ENCODE measurements at regions of chr1 and their contacts with region 1.

Region 1: DNA sequence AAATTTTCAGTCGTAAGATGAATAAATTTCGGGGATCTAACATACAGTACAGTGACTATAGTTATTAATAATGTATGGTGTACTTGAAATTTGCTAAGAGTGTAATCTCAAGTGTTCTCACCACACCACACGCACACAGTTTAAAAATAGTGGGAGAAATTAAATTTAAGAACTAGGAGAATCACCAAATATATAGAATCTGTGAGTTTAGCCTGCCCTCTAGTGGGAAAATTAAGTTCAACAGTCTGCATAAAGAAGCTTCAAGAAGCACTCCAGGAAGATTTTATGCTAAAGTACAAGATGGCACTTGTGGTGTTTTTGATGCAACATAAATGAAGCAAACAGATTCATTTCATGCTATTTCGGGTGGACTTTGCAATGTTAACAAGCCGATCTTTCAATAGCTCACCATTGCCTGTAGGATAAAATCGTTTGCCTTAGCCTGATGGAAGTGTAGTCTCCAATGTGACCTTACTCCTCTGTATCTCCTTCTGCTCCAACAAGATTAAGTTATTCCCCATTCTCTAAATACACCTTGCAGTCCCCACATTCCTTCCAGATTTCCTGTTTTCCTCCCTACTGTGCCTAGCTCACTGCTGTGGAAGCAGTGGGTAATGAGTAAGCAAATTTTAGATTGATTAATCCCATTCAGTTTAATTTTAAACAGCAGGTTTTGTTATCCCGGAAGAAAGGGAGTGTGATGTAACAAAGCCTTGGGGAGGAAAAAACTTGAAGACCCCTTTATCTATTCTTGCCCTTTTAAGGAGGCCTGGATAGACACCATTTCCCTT is 8.7 kb upstream of the PIK3C2B start:
- DNase-seq: no peak
- ATAC-seq: no peak

Region 2: GRCh38 chr1:204431310-204432165 is 71.8 kb before region 1 on chr1:
- intact Hi-C with region 1: loop called (anchors 5 kb)
- DNase-seq: peak; percentile 85
- ATAC-seq: peak; percentile 69 to 81

Region 3: DNA sequence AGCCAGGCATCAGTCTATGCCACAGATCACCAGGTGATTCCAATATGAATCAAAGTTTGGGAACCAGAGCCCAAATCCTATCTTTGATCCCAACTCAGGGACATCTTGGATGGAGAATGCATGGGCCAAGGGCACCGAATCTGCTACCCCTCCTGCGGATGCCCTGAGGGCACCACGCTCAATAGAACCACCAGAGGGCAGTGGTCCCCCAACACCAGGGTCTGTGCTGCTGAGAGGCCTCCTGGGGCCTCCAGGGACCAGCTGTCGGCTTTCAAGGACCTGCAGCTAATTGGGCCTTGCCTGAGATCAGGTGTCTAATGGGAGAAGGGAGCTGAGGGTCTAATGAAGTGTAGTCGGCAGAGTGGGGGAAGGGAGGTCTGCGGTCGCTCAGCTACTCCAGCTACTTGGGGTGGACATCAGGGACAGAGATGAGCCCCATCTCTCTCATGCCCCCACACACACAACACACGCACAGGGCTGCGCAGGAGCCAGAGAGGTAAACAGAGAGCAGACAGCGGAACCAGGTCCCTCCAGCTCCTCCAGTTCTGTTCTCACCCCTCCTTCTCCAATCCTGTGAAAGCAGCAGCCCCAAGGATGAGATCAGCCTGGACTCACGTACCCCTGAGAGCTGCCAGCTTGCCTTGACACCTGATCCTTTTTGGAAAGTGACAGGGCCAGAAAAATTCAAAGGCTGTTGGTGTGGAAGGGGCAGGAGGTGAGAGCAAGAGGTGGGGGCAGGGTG is 56.8 kb before region 1 on chr1:
- intact Hi-C with region 1: loop called in 1 of 2 experiments (anchors 5 kb)
- DNase-seq: peak; percentile 79
- ATAC-seq: peak; percentile 72 to 73

Region 4: DNA sequence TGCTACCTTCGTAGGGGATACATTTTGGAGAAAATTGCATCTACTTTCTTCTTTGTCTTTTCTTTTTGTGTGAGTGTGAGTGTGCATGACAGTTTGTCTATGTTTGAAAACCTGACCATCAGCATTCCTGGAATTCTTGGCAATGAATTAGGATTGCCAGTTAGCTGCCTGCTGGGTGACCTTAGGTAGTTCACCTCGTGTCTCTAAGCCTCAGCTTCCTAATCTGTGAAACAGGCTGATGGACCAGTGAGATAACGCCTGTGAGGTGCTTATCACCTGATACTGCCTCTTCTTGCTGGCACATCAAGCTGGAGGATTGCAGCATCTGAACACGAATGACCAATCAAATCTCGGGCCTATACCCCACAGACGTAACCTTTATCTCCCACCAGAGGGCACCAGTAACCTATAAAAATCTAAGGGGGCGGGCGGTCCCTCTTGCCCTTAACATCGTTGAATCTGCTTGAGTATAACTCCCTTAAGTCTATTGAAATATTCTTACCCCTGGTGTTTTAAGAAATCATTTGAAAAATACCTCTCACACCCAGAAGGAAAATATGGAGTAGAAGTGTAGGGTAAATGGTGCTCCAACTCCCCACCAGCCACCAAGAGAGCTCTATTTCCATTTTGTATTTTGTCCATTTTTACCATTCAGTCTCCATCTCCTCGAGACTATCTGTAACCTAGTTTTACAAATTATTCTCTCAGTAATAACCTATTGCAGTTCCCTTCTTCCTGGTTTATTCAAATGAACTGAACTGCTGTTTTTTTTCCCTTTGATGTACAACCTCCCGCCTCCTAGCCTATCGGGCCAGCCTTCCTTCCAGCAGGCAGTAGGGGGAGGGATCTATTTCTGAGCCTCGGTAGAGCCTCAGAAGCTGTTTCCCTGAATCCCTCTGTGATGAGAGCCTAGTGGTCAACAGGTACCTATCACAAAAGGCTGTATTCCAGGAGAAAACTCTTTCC is 62.6 kb after region 1 on chr1:
- intact Hi-C with region 1: no loop called
- DNase-seq: peak; percentile 55
- ATAC-seq: peak; percentile 85 to 88